Activated B cell treated with CpG ODN at 0.5 μM for 24 hours (primary cell): ENCODE measurements at regions of chr1 and their contacts with region 1.

Region 1: GRCh38 chr1:51768971-51769588 is 109.4 kb downstream of the NRDC start:
- DNase-seq: no peak
- ATAC-seq: peak; percentile 73
- H3K4me3 Mint-ChIP-seq: no peak overlapping the region
- H3K27ac Mint-ChIP-seq: peak overlapping the region; percentile 8
- H3K4me1 Mint-ChIP-seq: peaks cover 10% of the 10 kb centered on the region
- H3K27me3 Mint-ChIP-seq: no peaks in the 10 kb centered on the region
- CTCF ChIP-seq: no peak

Region 2: DNA sequence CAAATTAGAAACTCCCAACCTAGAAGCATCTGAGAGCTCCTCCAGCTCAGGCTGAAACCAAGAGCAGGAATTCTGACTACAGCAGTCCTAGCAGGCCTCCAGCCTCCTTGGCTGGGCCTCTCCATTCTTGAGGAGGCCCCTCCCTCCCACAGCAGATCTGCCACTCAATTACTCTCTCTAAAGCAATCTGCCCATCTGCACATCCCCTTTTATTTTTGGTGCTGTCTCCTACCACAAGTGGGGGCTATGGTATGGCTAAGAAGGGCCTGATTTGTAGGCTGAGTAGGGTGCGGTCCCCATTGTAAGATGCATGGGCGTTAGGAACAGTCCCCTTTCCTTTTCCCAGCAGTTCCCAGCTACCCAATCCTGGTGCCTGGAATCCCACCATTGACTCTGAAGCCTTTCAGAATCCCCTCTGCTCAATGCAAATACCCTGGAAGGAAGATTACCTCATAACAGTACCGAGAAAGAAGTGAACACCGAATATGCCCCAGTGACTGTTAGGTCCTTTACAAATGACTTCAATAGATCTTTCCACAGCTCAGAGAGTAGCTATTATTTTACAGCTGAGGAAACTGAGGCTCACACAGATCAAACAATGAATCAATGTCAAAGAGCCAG is 427.1 kb before region 1 on chr1:
- CTCF ChIA-PET with region 1: interaction called, 3 read pairs
- POLR2A ChIA-PET with region 1: no interaction called
- intact Hi-C with region 1: loop called (anchors 1 kb)
- DNase-seq: no peak
- ATAC-seq: peak; percentile 52
- H3K4me3 Mint-ChIP-seq: no peak overlapping the region
- H3K27ac Mint-ChIP-seq: no peak overlapping the region
- H3K4me1 Mint-ChIP-seq: peaks cover 3% of the 10 kb centered on the region
- H3K27me3 Mint-ChIP-seq: peaks cover 28% of the 10 kb centered on the region
- CTCF ChIP-seq: no peak

Region 3: DNA sequence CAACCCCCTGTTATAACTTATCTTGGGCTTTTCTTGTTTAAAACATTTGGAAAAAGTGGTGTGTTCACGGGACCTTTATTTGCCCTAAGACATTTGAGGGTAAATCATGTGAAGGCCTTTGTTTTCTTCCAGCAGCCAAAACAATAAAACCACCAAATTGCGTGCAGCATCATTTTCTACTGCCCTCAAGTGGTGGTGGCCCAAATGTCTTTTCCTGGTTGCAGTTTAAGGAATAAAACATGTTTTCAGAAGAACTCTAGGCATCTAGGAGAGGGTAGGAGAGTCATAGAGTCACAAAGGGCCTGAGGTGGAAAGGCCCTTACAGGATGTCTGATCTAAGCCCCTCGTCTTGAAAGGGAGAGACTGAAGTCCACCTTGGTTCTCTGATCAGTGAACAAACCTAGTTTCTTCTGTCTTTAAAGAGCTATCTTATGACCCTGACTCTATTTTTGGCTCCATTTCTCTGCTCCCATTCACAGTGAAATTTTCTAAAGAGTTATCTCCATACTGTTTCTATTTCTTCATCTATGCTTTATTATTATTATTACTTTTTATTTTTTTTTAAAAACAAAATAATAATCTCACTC is 234.0 kb before region 1 on chr1:
- CTCF ChIA-PET with region 1: interaction called, 10 read pairs
- POLR2A ChIA-PET with region 1: no interaction called
- intact Hi-C with region 1: no loop called
- DNase-seq: no peak
- ATAC-seq: peak; percentile 58
- H3K4me3 Mint-ChIP-seq: no peak overlapping the region
- H3K27ac Mint-ChIP-seq: peak overlapping the region; percentile 54
- H3K4me1 Mint-ChIP-seq: peaks cover 11% of the 10 kb centered on the region
- H3K27me3 Mint-ChIP-seq: no peaks in the 10 kb centered on the region
- CTCF ChIP-seq: no peak

Region 4: DNA sequence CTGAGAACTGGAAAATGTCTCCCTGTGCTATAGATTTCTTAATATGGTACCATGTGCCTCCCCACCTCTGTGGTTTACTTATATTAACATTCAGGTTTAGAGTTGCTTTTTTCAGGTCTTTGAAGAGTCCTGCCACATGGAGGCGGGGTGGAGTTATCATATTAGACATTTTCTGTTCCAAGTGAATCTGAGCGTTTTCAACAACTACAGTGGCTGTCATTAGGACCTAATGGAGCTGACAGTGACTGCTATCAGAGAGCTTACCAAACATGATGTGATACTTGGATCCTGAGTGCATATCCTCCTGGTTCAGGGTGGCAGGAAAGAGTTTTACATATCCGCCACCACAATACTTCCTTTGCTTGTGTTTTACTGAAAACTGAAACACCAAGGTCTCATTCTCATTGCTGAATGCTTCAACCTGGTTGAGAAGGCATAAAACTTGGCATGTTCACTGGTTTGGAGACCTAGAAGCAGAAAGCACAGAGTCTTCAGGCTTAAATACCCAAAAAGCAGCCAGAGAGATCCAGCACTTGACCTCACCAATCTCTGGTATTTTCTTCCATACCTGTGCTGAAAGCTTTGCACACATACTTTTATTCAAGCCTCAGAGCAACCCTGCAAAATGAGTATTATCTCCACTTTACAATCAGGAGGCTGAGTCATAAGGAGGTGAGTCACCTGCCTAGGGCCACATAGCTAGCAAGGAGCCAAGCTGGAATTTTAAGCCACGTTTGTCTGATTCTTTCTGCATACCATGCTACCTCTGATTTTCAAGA is 199.6 kb before region 1 on chr1:
- CTCF ChIA-PET with region 1: interaction called, 4 read pairs
- POLR2A ChIA-PET with region 1: interaction called, 3 read pairs
- intact Hi-C with region 1: loop called (anchors 1 kb)
- DNase-seq: no peak
- ATAC-seq: peak; percentile 53
- H3K4me3 Mint-ChIP-seq: peak overlapping the region; percentile 78
- H3K27ac Mint-ChIP-seq: peak overlapping the region; percentile 95
- H3K4me1 Mint-ChIP-seq: peaks cover 54% of the 10 kb centered on the region
- H3K27me3 Mint-ChIP-seq: no peaks in the 10 kb centered on the region
- CTCF ChIP-seq: no peak

Region 5: DNA sequence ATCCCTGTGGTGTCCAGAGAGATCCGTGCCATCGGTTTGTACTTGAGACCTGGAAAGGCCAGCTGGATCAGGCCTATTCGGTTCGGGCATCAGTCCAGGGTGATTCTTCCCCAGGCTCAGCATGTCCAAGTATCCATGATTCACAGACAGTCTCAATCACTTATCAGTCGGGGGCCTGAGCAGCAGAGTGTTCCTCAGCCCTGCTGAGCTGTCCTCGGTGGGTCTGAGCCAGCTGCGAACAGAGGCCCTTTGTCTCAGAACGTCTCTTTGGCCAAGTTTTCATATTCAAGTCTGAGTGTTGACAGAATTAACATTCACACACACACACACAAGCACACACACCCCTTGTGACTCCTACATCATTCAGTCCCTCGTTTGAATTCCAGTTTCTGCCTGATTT is 185.5 kb before region 1 on chr1:
- CTCF ChIA-PET with region 1: no interaction called
- POLR2A ChIA-PET with region 1: no interaction called
- intact Hi-C with region 1: no loop called
- DNase-seq: no peak
- ATAC-seq: no peak
- H3K4me3 Mint-ChIP-seq: no peak overlapping the region
- H3K27ac Mint-ChIP-seq: no peak overlapping the region
- H3K4me1 Mint-ChIP-seq: peaks cover 11% of the 10 kb centered on the region
- H3K27me3 Mint-ChIP-seq: no peaks in the 10 kb centered on the region
- CTCF ChIP-seq: no peak

Region 6: DNA sequence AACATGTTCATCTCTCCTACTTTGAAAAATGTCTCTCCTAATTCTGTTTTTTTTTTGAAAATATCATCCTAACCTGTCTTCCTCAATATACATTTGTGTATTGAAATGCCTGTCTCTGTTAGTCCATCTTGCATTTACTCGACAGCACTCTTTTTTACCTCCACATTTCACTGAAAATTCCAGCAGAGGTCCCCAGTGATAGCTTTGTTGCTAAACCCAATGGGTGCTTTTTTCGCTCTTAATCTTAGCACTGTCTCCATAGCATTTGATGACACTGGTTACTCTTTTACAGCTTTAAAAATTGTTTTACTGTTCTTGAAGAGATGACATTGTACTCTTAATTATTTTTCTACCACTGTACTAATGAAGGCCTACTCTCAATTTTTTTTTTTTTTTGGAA is 141.4 kb before region 1 on chr1:
- CTCF ChIA-PET with region 1: interaction called, 14 read pairs
- POLR2A ChIA-PET with region 1: no interaction called
- intact Hi-C with region 1: loop called (anchors 1 kb)
- DNase-seq: no peak
- ATAC-seq: no peak
- H3K4me3 Mint-ChIP-seq: no peak overlapping the region
- H3K27ac Mint-ChIP-seq: no peak overlapping the region
- H3K4me1 Mint-ChIP-seq: peaks cover 9% of the 10 kb centered on the region
- H3K27me3 Mint-ChIP-seq: no peaks in the 10 kb centered on the region
- CTCF ChIP-seq: no peak